Tibial artery (tissue), 4 donors: ENCODE measurements at regions of chr6 and their contacts with region 1.

Region 1: DNA sequence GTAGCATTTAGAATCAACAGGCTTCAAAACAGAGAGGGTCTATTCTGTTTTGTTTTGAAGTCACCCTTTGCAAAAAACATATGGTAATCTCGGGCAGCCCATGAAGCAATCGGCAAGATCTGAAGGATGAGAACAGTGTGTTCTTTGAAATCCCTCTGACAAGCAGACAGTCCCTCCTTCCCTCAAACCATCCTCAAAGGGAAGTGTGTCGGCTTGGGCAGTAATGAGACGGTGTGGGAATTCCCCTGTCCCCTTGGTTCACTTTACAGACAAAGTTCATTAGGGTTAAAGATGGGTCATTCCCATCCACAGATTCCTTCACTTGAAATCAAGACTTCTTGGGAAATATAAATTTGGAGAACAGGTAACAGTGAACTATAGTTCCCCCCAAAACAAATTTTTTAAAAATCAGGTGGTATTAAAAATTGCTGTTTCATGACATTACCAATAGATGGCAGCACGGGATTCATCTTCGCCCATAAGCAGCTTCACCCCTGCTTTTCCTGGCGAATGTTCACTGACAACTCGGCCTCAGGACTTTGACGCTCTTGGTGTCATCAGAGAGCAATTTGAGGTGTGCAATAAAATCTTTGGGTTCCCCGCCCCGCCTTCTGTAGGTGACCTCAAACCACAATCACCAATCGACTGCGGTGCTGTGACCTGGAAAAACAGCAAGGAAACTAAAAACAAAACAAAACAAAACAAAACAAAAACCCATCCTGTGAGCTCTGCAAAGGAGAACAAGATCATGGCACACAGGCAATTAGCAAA is 159.3 kb upstream of the TNFAIP3 start:
- DNase-seq: peak in 1 of 2 donors; percentile 73
- H3K4me3 ChIP-seq: no peak overlapping the region
- H3K27ac ChIP-seq: no peak overlapping the region
- H3K4me1 ChIP-seq: peaks cover 0 to 9% (median 3%) of the 10 kb centered on the region in 4 donors
- H3K27me3 ChIP-seq: no peaks in the 10 kb centered on the region
- CTCF ChIP-seq: peak; percentile 61 to 63

Region 2: DNA sequence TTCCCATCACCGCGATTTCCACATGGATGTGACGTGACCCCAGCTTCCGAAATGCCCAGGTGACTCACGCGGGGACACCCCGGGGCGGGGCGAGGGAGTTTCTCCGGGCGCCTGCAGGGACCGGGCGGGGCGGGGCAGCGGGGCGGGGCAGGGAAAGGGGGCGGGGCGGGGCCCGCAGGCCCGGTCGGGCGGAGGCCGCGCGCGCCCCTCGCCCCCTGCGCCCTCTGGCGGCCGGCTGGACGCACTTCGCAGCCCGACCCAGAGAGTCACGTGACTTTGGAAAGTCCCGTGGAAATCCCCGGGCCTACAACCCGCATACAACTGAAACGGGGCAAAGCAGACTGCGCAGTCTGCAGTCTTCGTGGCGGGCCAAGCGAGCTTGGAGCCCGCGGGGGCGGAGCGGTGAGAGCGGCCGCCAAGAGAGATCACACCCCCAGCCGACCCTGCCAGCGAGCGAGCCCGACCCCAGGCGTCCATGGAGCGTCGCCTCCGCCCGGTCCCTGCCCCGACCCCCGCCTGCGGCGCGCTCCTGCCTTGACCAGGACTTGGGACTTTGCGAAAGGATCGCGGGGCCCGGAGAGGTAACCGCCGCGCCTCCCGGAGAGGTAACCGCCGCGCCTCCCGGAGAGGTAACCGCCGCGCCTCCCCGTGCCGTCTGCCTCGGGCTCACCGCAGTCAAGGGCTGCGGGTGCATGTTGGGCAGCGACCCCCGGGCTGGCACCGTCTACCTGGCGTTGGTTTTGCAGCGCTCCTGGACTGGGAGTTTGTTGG is 159.3 kb after region 1 on chr6 and contains the start of gene TNFAIP3:
- intact Hi-C with region 1: loop called (anchors 5 kb)
- DNase-seq: peak; percentile 95 to 96
- H3K4me3 ChIP-seq: peak within 1 kb of the TSS; percentile 90 to 93
- H3K27ac ChIP-seq: peak within 1 kb of the TSS; percentile 79 to 82
- H3K4me1 ChIP-seq: peaks cover 0 to 33% (median 14%) of the 10 kb centered on the region in 4 donors
- H3K27me3 ChIP-seq: no peaks in the 10 kb centered on the region
- CTCF ChIP-seq: peak; percentile 63 to 87

Region 3: GRCh38 chr6:137944793-137945498 is 237.2 kb after region 1 on chr6:
- intact Hi-C with region 1: loop called (anchors 10 kb)
- DNase-seq: no peak
- H3K4me3 ChIP-seq: no peak overlapping the region
- H3K27ac ChIP-seq: no peak overlapping the region
- H3K4me1 ChIP-seq: no peaks in the 10 kb centered on the region
- H3K27me3 ChIP-seq: no peaks in the 10 kb centered on the region
- CTCF ChIP-seq: peak; percentile 68 to 70